ENCODE measurements at regions of chr6 and their contacts with region 1.

Region 1: DNA sequence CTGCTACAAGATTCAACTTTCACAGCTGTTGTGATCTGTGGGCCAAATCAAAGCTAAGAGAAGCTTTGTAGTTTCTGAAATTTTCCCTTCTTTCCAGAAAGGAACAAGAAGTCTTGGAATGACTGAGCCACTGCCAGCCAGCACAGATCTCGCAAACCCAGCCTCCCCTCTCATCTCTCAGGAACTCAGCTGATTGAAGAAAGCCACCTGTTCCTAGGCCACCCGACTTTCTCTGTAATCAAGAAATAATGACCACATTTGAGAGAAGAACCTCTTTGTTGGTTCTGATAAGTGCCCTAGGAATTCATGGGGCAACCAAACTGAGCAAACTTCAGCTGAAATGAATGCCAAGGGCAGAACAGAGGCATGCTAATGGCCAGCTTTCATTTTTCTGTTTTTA is 61.7 kb downstream of the HDGFL1 start:
- DNase-seq: no peak
- ATAC-seq: peak in 5 of 8 donors; percentile 52 to 74 (median 64)
- H3K4me3 ChIP-seq: no peak overlapping the region
- H3K27ac ChIP-seq: no peak overlapping the region
- H3K4me1 ChIP-seq: peaks cover 0 to 28% (median 0%) of the 10 kb centered on the region in 9 donors
- H3K27me3 ChIP-seq: no peaks in the 10 kb centered on the region
- CTCF ChIP-seq: no peak

Region 2: GRCh38 chr6:22471132-22471690 is 159.9 kb before region 1 on chr6:
- intact Hi-C with region 1: no loop called
- DNase-seq: peak in 1 of 2 donors; percentile 72
- ATAC-seq: peak; percentile 85 to 93 (median 90)
- H3K4me3 ChIP-seq: peak overlapping the region in 2 of 10 donors; percentile 17
- H3K27ac ChIP-seq: peak overlapping the region in 9 of 10 donors; percentile 10 to 80 (median 48)
- H3K4me1 ChIP-seq: peaks cover 0 to 48% (median 25%) of the 10 kb centered on the region in 9 donors
- H3K27me3 ChIP-seq: no peaks in the 10 kb centered on the region
- CTCF ChIP-seq: peak in 7 of 9 donors; percentile 11 to 63 (median 27)

Region 3: DNA sequence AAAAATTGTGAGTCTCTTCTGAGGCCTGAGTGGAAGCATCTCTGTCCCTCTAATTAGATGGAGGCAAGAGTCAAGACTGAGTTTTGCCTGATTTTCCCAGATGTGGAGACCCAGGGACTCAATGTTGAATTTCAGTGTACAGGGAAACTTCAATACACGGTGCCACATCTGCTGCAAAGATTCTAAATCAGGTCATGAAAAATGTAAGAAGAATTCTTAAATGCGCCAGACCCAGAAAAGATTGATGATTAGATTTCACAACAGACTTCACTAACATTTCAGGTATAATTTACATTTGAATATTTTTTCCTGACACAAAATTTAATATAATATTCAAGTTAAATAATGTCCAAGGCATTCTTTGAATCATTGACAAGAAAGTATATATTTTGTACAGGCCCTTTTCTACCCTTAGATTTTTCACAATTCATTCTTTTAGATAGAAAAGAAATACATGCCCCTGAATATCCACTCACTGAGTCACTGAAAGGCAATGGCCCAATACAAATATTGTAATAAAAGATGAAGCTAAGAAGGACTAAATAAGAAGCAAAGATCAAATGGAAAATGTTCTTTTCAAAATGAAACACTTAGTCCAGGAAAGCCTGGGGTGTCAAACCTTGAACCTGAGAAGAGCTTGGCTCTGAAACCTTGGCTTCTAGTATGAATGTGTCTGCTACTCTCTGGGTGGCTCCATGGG is 80.0 kb before region 1 on chr6:
- intact Hi-C with region 1: no loop called
- DNase-seq: no peak
- ATAC-seq: no peak
- H3K4me3 ChIP-seq: no peak overlapping the region
- H3K27ac ChIP-seq: no peak overlapping the region
- H3K4me1 ChIP-seq: peaks cover 0 to 3% (median 0%) of the 10 kb centered on the region in 9 donors
- H3K27me3 ChIP-seq: no peaks in the 10 kb centered on the region
- CTCF ChIP-seq: no peak

Region 4: DNA sequence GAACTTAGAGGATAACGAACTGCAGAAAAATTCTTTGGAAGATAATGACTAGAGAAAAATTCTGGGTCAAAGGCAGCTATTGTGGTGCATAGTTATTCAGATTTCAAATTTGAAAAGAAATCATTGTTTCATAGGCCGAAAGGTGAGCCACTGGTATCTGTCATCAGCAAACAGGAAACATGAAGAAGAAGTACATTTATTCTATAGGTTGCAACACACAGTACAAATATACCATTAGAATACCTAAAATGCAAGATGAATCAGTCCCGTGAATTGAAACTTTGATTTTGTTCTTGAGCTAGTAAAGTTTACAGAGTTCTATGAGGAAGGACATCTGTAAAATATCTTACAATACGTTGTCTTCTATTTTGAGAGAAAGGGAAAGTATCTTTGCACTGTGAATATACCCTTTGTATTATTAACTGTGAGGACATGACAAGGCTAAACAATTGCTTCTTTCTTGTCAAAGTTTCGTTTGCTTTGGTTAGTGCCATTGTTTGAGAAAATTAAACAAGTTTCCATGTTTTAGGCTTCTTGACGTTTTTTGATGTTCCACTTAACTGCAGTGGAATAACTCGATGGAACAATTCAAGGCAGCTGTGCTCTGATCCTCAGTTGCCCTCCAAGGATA is 23.0 kb after region 1 on chr6:
- intact Hi-C with region 1: loop called in 1 of 10 experiments (anchors 1 kb)
- DNase-seq: no peak
- ATAC-seq: no peak
- H3K4me3 ChIP-seq: no peak overlapping the region
- H3K27ac ChIP-seq: peak overlapping the region in 1 of 10 donors; percentile 7
- H3K4me1 ChIP-seq: peaks cover 0 to 28% (median 12%) of the 10 kb centered on the region in 9 donors
- H3K27me3 ChIP-seq: no peaks in the 10 kb centered on the region
- CTCF ChIP-seq: no peak

Region 5: GRCh38 chr6:23446394-23447046 is 815.4 kb after region 1 on chr6:
- intact Hi-C with region 1: loop called in 1 of 10 experiments (anchors 5 kb)
- DNase-seq: peak in 1 of 2 donors; percentile 7
- ATAC-seq: peak in 7 of 8 donors; percentile 66 to 93 (median 78)
- H3K4me3 ChIP-seq: no peak overlapping the region
- H3K27ac ChIP-seq: peak overlapping the region in 6 of 10 donors; percentile 33 to 74 (median 60)
- H3K4me1 ChIP-seq: peaks cover 0 to 23% (median 15%) of the 10 kb centered on the region in 9 donors
- H3K27me3 ChIP-seq: no peaks in the 10 kb centered on the region
- CTCF ChIP-seq: peak; percentile 35 to 74 (median 58)